Right cardiac atrium (tissue), 5 donors: ENCODE measurements at regions of chr4 and their contacts with region 1.

Region 1: GRCh38 chr4:6986781-6987587 is 56.2 kb upstream of the TADA2B start:
- DNase-seq: peak; percentile 95 to 98 (median 98)
- ATAC-seq: peak; percentile 95 to 96
- H3K4me3 ChIP-seq: peak overlapping the region; percentile 73
- H3K27ac ChIP-seq: peak overlapping the region; percentile 83
- H3K4me1 ChIP-seq: peaks cover 9% of the 10 kb centered on the region
- H3K27me3 ChIP-seq: no peaks in the 10 kb centered on the region

Region 2: GRCh38 chr4:6909073-6909965 is 77.7 kb before region 1 on chr4 and contains the start of gene TBC1D14:
- intact Hi-C with region 1: loop called in 2 of 4 experiments (anchors 2 to 5 kb)
- DNase-seq: peak; percentile 89 to 95 (median 95)
- ATAC-seq: peak; percentile 96
- H3K4me3 ChIP-seq: peak within 1 kb of the TSS; percentile 73
- H3K27ac ChIP-seq: peak within 1 kb of the TSS; percentile 90
- H3K4me1 ChIP-seq: peaks cover 10% of the 10 kb centered on the region
- H3K27me3 ChIP-seq: no peaks in the 10 kb centered on the region
- total RNA-seq, gene TBC1D14: 36.2 to 44.8 (median 42.5) TPM

Region 3: GRCh38 chr4:6920171-6920570 is 66.8 kb before region 1 on chr4:
- intact Hi-C with region 1: no loop called
- DNase-seq: no peak
- ATAC-seq: no peak
- H3K4me3 ChIP-seq: no peak overlapping the region
- H3K27ac ChIP-seq: no peak overlapping the region
- H3K4me1 ChIP-seq: peaks cover 10% of the 10 kb centered on the region
- H3K27me3 ChIP-seq: no peaks in the 10 kb centered on the region

Region 4: GRCh38 chr4:7042697-7043464 is 55.9 kb after region 1 on chr4 and contains the start of gene TADA2B:
- intact Hi-C with region 1: loop called in 1 of 4 experiments (anchors 5 kb)
- DNase-seq: peak; percentile 97 to 99 (median 99)
- ATAC-seq: peak; percentile 96 to 97
- H3K4me3 ChIP-seq: peak within 1 kb of the TSS; percentile 68
- H3K27ac ChIP-seq: peak within 1 kb of the TSS; percentile 90
- H3K4me1 ChIP-seq: peaks cover 11% of the 10 kb centered on the region
- H3K27me3 ChIP-seq: no peaks in the 10 kb centered on the region
- total RNA-seq, gene TADA2B: 29.4 to 35.6 (median 31.7) TPM

Region 5: GRCh38 chr4:7410446-7410845 is 423.5 kb after region 1 on chr4:
- intact Hi-C with region 1: no loop called
- DNase-seq: peak in 1 of 3 donors; percentile 17
- ATAC-seq: no peak
- H3K4me3 ChIP-seq: no peak overlapping the region
- H3K27ac ChIP-seq: no peak overlapping the region
- H3K4me1 ChIP-seq: no peaks in the 10 kb centered on the region
- H3K27me3 ChIP-seq: no peaks in the 10 kb centered on the region